ENCODE measurements at regions of chr7 and their contacts with region 1.

Region 1: DNA sequence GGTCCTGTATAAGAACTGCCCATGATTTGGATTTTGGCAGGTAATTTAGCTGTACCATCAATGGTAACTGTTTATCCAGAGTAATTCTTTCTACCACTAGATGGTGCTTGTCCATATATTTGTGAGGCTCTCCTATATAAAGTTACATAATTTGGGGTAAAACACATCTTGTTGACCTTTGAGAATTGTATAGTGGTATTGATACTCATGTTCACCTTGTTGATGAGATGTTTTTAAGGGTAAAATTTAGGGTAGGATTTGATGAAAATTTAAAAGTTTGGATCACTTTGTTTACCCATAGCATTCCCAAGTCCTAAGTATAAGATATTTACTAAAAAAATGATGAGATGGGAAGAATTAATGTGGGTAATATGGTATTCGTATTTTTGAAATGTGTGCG is 31.6 kb downstream of the ST7 start:
- DNase-seq: no peak
- H3K4me3 ChIP-seq: no peak overlapping the region
- H3K27ac ChIP-seq: no peak overlapping the region
- H3K4me1 ChIP-seq: peaks cover 0 to 4% (median 0%) of the 10 kb centered on the region in 4 donors
- H3K27me3 ChIP-seq: no peaks in the 10 kb centered on the region
- CTCF ChIP-seq: peak; percentile 43 to 60 (median 52)
- EP300 ChIP-seq: no peak
- POLR2A ChIP-seq: no peak

Region 2: GRCh38 chr7:116443101-116443523 is 541.8 kb before region 1 on chr7:
- intact Hi-C with region 1: no loop called
- DNase-seq: no peak
- H3K4me3 ChIP-seq: no peak overlapping the region
- H3K27ac ChIP-seq: peak overlapping the region in 3 of 4 donors; percentile 51 to 59 (median 54)
- H3K4me1 ChIP-seq: peaks cover 0 to 44% (median 25%) of the 10 kb centered on the region in 4 donors
- H3K27me3 ChIP-seq: no peaks in the 10 kb centered on the region
- CTCF ChIP-seq: no peak
- EP300 ChIP-seq: no peak
- POLR2A ChIP-seq: no peak

Region 3: GRCh38 chr7:116872026-116872425 is 112.9 kb before region 1 on chr7:
- intact Hi-C with region 1: no loop called
- DNase-seq: no peak
- H3K4me3 ChIP-seq: no peak overlapping the region
- H3K27ac ChIP-seq: peak overlapping the region in 2 of 4 donors; percentile 55
- H3K4me1 ChIP-seq: peaks cover 0 to 98% (median 91%) of the 10 kb centered on the region in 4 donors
- H3K27me3 ChIP-seq: no peaks in the 10 kb centered on the region
- CTCF ChIP-seq: no peak
- EP300 ChIP-seq: no peak
- POLR2A ChIP-seq: no peak

Region 4: GRCh38 chr7:117047496-117047895 is 62.6 kb after region 1 on chr7:
- intact Hi-C with region 1: no loop called
- DNase-seq: no peak
- H3K4me3 ChIP-seq: no peak overlapping the region
- H3K27ac ChIP-seq: no peak overlapping the region
- H3K4me1 ChIP-seq: peaks cover 0 to 70% (median 62%) of the 10 kb centered on the region in 4 donors
- H3K27me3 ChIP-seq: no peaks in the 10 kb centered on the region
- CTCF ChIP-seq: no peak
- EP300 ChIP-seq: no peak
- POLR2A ChIP-seq: no peak

Region 5: GRCh38 chr7:117119192-117119924 is 134.4 kb after region 1 on chr7:
- intact Hi-C with region 1: loop called (anchors 2 kb)
- DNase-seq: peak; percentile 87
- H3K4me3 ChIP-seq: no peak overlapping the region
- H3K27ac ChIP-seq: no peak overlapping the region
- H3K4me1 ChIP-seq: peaks cover 0 to 23% (median 11%) of the 10 kb centered on the region in 4 donors
- H3K27me3 ChIP-seq: no peaks in the 10 kb centered on the region
- CTCF ChIP-seq: peak; percentile 75 to 85 (median 82)
- EP300 ChIP-seq: no peak
- POLR2A ChIP-seq: no peak

Region 6: GRCh38 chr7:117127585-117128168 is 142.8 kb after region 1 on chr7:
- intact Hi-C with region 1: loop called (anchors 2 kb)
- DNase-seq: peak; percentile 77
- H3K4me3 ChIP-seq: no peak overlapping the region
- H3K27ac ChIP-seq: no peak overlapping the region
- H3K4me1 ChIP-seq: peaks cover 0 to 28% (median 16%) of the 10 kb centered on the region in 4 donors
- H3K27me3 ChIP-seq: no peaks in the 10 kb centered on the region
- CTCF ChIP-seq: peak; percentile 50 to 76 (median 70)
- EP300 ChIP-seq: no peak
- POLR2A ChIP-seq: no peak

Measured in sigmoid colon (tissue), 7 donors.